Tibial artery (tissue), 4 donors: ENCODE measurements at regions of chr4 and their contacts with region 1.

Region 1: DNA sequence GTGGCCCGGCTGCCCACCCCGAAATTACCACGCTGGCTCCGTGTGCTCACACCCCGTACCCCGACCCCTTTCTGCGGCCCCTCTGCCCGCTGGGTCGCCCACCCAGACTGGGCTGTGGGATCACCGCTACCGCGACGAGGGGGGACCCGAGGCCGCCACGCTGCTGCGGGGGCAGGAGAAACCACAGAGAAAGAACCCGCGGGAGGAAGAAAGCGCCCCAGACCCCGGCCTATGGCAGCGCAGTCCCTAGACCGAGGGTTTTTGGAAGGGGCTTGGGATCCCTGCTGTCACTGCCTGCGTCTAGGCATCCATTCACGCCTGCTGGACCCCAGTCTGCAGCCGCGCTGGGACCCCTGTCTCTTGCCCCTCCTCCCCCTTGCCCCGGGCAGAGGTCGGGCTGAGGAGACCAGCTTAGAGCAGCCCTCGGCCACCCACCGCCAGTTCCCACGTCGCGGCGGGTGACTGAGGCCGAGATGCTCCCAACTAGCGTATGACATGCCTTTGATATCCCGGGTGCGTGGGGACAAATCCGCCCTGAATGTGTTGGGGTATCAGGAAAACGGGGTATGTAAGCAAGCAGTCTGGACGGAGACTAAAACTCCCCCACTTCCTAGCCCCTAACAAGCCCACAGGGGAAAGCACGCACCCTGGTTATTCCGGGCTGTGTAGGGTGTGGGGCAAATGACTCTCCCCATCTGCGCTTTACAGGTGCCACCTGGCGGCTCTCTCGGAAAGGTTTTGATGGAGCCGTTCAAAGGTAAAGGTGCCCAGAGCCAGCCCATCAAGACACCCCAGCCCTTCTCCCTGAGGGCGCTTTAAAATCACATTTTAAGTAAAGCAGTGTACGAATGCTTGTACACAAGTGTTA is 862 bp upstream of the INPP4B start:
- DNase-seq: peak in 1 of 2 donors; percentile 67
- H3K4me3 ChIP-seq: peak overlapping the region; percentile 70 to 93
- H3K27ac ChIP-seq: peak overlapping the region; percentile 83
- H3K4me1 ChIP-seq: peaks cover 0 to 23% (median 7%) of the 10 kb centered on the region in 4 donors
- H3K27me3 ChIP-seq: peaks cover 0 to 5% of the 10 kb centered on the region in 2 donors
- CTCF ChIP-seq: peak in 1 of 2 experiments; percentile 26

Region 2: DNA sequence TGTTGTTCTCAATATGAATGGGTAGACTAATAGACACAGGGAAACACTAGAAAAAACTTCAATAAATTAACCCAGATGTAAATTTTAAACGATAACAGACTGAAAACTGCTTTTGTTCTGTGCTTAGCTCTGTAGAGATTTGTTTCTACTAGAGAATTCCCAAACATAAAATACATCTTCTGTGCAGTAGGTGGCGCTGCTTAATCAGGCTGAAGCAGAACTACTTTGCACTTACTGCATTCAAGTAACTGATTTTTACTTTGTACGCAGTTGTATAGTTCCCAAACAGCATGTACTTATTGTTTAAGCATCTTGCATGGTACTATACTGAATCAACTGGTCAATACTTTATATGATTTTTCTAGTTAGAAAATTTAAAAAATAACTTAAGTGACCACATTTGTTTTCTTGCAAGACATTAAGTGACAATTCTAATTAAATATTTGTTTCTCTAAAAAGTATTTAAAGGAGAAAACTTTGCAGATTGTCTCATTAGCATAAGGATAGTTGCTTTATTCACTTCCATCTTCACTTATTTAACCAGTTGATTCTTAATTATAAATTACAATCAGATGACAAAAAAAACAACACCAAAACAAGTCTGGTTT is 720.0 kb before region 1 on chr4:
- intact Hi-C with region 1: loop called (anchors 5 kb)
- DNase-seq: peak in 1 of 2 donors; percentile 25
- H3K4me3 ChIP-seq: no peak overlapping the region
- H3K27ac ChIP-seq: no peak overlapping the region
- H3K4me1 ChIP-seq: peaks cover 0 to 32% (median 5%) of the 10 kb centered on the region in 4 donors
- H3K27me3 ChIP-seq: no peaks in the 10 kb centered on the region
- CTCF ChIP-seq: peak; percentile 79 to 82

Region 3: GRCh38 chr4:142353149-142353738 is 493.7 kb before region 1 on chr4:
- intact Hi-C with region 1: loop called (anchors 10 kb)
- DNase-seq: no peak
- H3K4me3 ChIP-seq: no peak overlapping the region
- H3K27ac ChIP-seq: peak overlapping the region in 1 of 2 donors; percentile 28
- H3K4me1 ChIP-seq: peaks cover 0 to 53% (median 6%) of the 10 kb centered on the region in 4 donors
- H3K27me3 ChIP-seq: no peaks in the 10 kb centered on the region
- CTCF ChIP-seq: peak; percentile 75 to 89

Region 4: DNA sequence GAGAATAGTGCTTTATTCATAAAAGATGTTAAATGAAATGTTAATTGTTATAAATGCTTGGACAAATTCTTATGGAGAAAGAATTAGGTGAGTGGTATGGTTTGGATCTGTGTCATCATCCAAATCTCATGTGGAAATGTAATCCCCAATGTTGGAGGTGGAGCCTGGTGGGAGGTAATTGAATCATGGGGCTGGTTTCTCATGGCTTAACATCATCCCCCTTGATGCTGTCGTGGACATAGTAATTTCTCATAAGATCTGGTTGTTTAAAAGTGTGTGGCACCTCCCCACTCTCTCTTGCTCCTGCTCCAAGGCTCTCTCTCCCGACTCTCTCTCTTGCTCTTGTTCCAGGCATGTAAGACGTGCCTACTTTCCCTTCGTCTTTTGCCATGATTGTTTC is 1035.9 kb after region 1 on chr4:
- intact Hi-C with region 1: no loop called
- DNase-seq: no peak
- H3K4me3 ChIP-seq: no peak overlapping the region
- H3K27ac ChIP-seq: no peak overlapping the region
- H3K4me1 ChIP-seq: no peaks in the 10 kb centered on the region
- H3K27me3 ChIP-seq: no peaks in the 10 kb centered on the region
- CTCF ChIP-seq: no peak